PC-9 (cell line): ENCODE measurements at regions of chr4 and their contacts with region 1.

Region 1: DNA sequence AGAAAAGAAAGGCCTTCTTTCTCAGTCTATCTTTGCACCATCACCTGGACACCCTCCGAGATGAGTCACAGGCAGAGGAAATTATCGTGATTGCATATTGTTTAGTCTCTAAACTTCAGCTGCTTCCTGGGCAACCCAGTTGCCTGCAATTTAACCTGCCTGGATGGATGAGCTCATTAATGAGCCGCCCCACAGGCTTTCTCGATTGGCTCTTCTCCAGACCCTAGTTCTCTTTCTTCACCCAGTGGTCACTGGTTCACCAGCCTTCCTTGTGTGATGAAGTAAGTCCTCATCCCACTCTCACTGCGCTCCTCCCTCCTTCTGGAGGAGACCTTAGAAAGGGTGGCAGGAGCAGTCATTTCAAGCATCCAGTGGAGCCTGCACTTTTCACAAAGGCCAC is 94.4 kb downstream of the SOWAHB start:
- DNase-seq: peak; percentile 78 to 94
- H3K4me3 ChIP-seq: no peak overlapping the region
- H3K27ac ChIP-seq: peak overlapping the region; percentile 59
- H3K4me1 ChIP-seq: peaks cover 19% of the 10 kb centered on the region
- H3K27me3 ChIP-seq: no peaks in the 10 kb centered on the region
- CTCF ChIP-seq: no peak

Region 2: DNA sequence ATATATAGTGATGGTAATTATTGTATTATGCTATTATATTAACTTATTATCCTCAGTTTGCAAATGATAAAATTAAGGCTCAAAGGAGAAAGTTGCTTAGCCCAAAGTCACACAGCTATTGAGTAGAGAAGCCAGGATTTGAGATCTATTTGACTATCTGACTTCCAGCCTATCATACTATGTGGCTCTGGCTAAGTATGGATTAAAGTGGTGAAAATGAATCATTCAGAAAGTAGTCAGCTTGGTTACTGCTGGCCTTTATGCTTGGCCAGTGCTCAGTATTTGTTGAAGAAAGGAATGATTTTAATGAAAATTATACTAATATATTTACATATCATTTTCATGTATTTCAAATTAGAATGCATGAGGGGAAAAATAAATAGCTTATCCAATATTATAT is 148.7 kb before region 1 on chr4:
- CTCF ChIA-PET with region 1: no interaction called
- POLR2A ChIA-PET with region 1: no interaction called
- intact Hi-C with region 1: no loop called
- DNase-seq: no peak
- H3K4me3 ChIP-seq: no peak overlapping the region
- H3K27ac ChIP-seq: no peak overlapping the region
- H3K4me1 ChIP-seq: peaks cover 21% of the 10 kb centered on the region
- H3K27me3 ChIP-seq: no peaks in the 10 kb centered on the region
- CTCF ChIP-seq: no peak

Region 3: DNA sequence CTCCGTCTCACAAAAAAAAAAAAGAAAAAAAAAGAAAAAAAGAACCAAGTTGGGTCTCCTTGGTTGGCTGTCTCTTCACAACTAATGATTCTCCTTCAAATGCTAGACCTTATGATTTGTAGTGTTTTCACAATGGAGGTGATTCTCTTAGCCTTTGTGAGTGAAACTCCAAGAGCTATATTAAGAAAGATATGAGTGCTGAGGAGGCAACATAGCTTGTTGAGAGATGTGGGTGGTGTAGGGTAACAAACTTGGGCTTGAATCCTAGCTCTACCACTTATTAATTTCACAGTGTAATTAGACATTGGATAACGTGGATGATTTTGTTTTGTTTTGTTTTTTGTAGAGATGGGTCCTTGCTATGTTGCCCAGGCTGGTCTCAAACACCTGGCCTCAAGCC is 135.7 kb after region 1 on chr4:
- CTCF ChIA-PET with region 1: no interaction called
- POLR2A ChIA-PET with region 1: interaction called, 21 read pairs
- intact Hi-C with region 1: no loop called
- DNase-seq: no peak
- H3K4me3 ChIP-seq: no peak overlapping the region
- H3K27ac ChIP-seq: no peak overlapping the region
- H3K4me1 ChIP-seq: no peaks in the 10 kb centered on the region
- H3K27me3 ChIP-seq: no peaks in the 10 kb centered on the region
- CTCF ChIP-seq: no peak